Activated CD8-positive, alpha-beta memory T cell treated with anti-CD3 and anti-CD28 coated beads, Interleukin-2, amount 10 ng/mL, durations not matched to agents 7 days and 5 days (primary cell): ENCODE measurements at regions of chr10 and their contacts with region 1.

Region 1: DNA sequence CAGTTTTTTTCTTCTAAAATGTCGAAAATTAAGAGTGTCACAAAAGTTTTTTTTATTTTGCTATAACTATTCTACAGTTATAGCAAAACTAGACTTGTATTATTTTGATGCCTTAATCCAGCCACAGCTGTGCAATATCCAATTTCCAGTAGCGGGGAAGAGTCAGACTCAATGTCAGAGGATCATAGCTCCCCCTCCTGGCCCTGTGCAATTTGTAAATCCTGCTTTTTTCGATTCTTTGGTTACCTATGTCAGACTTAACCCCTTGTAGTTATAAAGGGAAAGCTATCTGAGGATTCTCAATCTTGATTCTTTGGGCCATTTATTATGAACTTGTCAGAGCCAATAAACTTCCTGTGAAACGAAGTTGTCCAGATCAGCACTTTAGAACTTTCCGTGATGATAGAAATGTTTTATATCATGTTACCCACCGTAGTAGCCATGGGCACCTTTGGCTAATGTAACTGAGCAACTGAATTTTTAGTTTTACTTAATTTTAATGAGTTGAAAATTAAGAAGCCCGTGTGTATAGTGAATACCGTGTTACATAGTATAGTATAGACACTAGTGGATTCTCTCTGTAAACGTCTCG is 87.7 kb upstream of the PRKCQ start:
- DNase-seq: peak; percentile 67
- ATAC-seq: peak; percentile 34
- H3K4me3 Mint-ChIP-seq: no peak overlapping the region
- H3K27ac Mint-ChIP-seq: no peak overlapping the region
- H3K4me1 Mint-ChIP-seq: peaks cover 24% of the 10 kb centered on the region
- H3K27me3 Mint-ChIP-seq: peaks cover 8% of the 10 kb centered on the region

Region 2: DNA sequence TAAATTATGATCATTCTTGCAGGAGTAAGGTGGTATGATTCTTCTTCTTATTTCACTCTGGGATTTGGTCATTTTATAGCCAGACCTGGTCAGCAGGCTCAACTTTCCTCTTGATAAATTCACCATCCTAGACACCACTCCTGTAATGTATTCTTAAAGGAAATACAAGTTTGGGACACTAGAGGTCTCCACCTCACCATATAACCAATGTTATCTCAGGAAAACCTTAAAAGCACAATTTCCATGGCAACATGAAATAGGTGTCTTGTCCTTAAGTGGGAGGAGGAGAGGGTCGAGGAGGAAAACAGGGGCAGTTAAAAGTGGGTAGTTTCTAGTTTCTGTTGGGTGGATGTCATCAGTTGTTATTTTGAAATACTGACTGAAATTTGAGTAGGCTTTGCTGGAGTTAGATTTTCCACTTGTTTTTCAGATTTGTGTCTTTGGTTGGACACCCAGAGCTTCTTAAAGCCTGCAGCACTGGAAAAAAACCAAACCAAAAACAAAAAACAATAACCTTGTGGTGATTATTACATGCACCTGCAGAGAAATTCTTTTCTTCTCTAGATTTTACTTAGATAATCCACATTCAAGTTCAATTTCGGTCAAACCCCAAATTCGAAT is 250.8 kb before region 1 on chr10:
- CTCF ChIA-PET with region 1: interaction called, 55 read pairs
- DNase-seq: no peak
- ATAC-seq: peak; percentile 82
- H3K4me3 Mint-ChIP-seq: no peak overlapping the region
- H3K27ac Mint-ChIP-seq: no peak overlapping the region
- H3K4me1 Mint-ChIP-seq: no peaks in the 10 kb centered on the region
- H3K27me3 Mint-ChIP-seq: no peaks in the 10 kb centered on the region

Region 3: DNA sequence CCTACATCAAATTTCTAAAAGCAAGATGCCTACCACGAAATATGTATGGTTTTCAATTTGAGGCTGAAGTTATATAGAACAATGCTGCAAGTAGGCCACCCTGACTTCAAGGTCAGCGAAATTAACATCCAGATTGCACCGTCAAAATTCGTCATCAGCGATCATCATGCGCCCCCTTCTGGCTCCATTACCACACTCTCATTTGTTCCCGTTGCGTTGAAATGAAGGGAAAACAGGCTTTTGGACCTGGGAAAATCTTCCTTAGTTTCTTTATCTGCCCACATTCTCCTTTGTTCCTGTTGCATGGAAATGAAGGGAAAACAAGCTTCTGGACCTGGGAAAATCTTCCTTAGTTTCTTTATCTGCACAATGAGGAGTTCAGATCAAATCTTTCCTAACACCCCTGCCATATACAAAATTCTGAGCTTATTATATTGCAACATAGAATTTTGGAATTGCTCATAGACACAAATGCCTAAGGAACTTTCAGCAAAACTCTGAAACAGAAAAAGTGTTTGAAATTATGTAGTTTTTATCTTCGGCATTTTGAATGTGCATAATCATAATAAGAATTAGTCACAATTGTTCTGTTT is 10.5 kb after region 1 on chr10:
- CTCF ChIA-PET with region 1: interaction called, 17 read pairs
- DNase-seq: peak; percentile 70
- ATAC-seq: peak; percentile 69
- H3K4me3 Mint-ChIP-seq: no peak overlapping the region
- H3K27ac Mint-ChIP-seq: no peak overlapping the region
- H3K4me1 Mint-ChIP-seq: peaks cover 10% of the 10 kb centered on the region
- H3K27me3 Mint-ChIP-seq: peaks cover 60% of the 10 kb centered on the region

Region 4: DNA sequence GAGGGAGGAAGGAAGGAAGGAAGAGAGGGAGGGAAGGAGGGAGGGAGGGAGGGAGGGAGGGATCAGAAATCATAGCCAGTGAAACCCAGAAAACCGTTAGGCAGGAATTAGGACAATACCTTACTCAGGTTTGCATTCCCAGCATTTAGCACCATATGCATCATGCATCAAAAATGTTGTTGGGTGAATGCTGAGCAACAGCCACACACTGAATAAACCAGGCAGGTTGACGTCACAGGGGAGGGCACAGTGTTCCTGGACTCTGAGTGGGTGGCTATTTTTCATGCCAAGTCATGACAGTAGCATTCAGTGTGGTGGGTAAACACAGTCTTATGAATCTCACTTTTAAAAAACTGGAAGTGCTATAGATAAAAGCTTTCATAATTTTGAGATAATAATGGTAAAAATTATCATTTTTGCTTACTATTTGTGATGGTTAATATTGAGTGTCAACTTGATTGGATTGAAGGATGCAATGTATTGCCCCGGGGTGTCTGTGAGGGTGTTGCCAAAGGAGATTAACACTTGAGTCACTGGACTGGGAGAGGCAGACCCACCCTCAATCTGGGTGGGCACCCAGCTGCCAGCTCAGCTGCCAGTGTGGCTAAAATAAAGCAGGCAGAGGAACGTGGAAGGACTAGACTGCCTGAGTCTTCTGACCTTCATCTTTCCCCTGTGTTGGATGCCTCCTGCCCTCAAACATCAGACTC is 111.4 kb after region 1 on chr10:
- CTCF ChIA-PET with region 1: no interaction called
- DNase-seq: no peak
- ATAC-seq: no peak
- H3K4me3 Mint-ChIP-seq: no peak overlapping the region
- H3K27ac Mint-ChIP-seq: no peak overlapping the region
- H3K4me1 Mint-ChIP-seq: no peaks in the 10 kb centered on the region
- H3K27me3 Mint-ChIP-seq: peaks cover 63% of the 10 kb centered on the region